Endothelial cell of umbilical vein (primary cell): ENCODE measurements at regions of chr9 and their contacts with region 1.

Region 1: GRCh38 chr9:133184962-133185361 is 21.2 kb upstream of the GBGT1 start:
- DNase-seq: peak; percentile 72
- H3K4me3 ChIP-seq: no peak overlapping the region
- H3K27ac ChIP-seq: no peak overlapping the region
- H3K4me1 ChIP-seq: no peaks in the 10 kb centered on the region
- H3K27me3 ChIP-seq: peaks cover 5 to 9% of the 10 kb centered on the region in 2 experiments
- CTCF ChIP-seq: peak; percentile 57 to 60
- POLR2A ChIP-seq: no peak

Region 2: GRCh38 chr9:133170716-133171559 is 14.0 kb before region 1 on chr9:
- CTCF ChIA-PET with region 1: interaction called, 21 read pairs
- POLR2A ChIA-PET with region 1: no interaction called
- dilution Hi-C with region 1: no loop called
- intact Hi-C with region 1: no loop called
- DNase-seq: no peak
- H3K4me3 ChIP-seq: no peak overlapping the region
- H3K27ac ChIP-seq: no peak overlapping the region
- H3K4me1 ChIP-seq: no peaks in the 10 kb centered on the region
- H3K27me3 ChIP-seq: peaks cover 8 to 13% of the 10 kb centered on the region in 2 experiments
- CTCF ChIP-seq: no peak
- POLR2A ChIP-seq: no peak

Region 3: GRCh38 chr9:133257465-133257956 is 72.5 kb after region 1 on chr9:
- CTCF ChIA-PET with region 1: interaction called, 14 read pairs
- POLR2A ChIA-PET with region 1: no interaction called
- dilution Hi-C with region 1: no loop called
- intact Hi-C with region 1: no loop called
- DNase-seq: peak; percentile 44
- H3K4me3 ChIP-seq: no peak overlapping the region
- H3K27ac ChIP-seq: no peak overlapping the region
- H3K4me1 ChIP-seq: no peaks in the 10 kb centered on the region
- H3K27me3 ChIP-seq: no peaks in the 10 kb centered on the region
- CTCF ChIP-seq: no peak
- POLR2A ChIP-seq: no peak

Region 4: GRCh38 chr9:133320421-133320881 is 135.5 kb after region 1 on chr9:
- CTCF ChIA-PET with region 1: interaction called, 11 read pairs
- POLR2A ChIA-PET with region 1: no interaction called
- dilution Hi-C with region 1: no loop called
- intact Hi-C with region 1: no loop called
- DNase-seq: no peak
- H3K4me3 ChIP-seq: no peak overlapping the region
- H3K27ac ChIP-seq: no peak overlapping the region
- H3K4me1 ChIP-seq: no peaks in the 10 kb centered on the region
- H3K27me3 ChIP-seq: no peaks in the 10 kb centered on the region
- CTCF ChIP-seq: no peak
- POLR2A ChIP-seq: no peak

Region 5: DNA sequence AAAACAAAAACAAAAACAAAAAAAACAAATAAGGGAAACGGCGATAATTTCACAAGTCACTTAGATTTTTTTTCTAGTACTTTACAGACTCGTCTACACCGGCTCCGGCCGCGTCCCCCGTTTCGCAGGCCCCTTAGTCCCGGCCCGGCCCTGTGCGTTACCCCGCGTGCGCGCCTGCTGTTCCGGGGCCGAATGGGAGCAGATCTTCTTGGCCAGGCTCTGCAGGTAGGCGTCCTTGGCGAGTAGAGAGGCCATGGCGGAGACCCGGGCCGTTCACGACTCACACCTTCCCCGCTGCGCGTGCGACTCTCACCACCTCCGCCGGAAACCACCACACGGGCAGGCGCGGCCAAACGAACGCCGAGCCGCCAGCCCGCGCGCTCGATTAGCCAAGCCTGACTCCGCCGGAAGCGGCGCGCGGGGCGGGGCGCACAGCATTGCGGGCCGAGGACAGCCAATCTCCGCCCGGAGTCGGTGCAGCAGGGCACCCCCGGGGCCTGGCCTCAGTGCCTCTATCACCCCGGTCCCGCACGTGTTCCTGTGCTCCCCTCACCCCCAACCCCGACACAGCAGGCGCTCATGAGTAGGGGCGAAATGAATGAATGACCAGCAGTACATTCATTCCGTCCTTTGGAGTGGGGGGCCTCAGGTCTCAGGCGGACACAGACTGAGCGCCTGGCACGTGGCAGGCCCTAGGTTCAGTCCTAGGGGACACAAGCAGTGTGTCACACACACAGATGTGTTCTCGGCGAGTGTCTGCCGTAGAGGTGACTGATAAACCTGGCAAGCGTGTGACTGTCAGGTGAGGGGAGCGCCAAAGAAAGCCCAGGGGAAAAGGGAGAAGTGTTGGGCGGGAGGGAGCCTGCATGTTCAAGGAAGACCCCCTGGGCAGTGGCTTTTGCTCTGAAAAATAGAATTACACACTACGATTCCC is 151.2 kb after region 1 on chr9 and contains the start of gene SURF6:
- CTCF ChIA-PET with region 1: interaction called, 128 read pairs
- POLR2A ChIA-PET with region 1: no interaction called
- dilution Hi-C with region 1: no loop called
- intact Hi-C with region 1: no loop called
- DNase-seq: peak; percentile 89
- H3K4me3 ChIP-seq: peak within 1 kb of the TSS; percentile 64 to 82 (median 71)
- H3K27ac ChIP-seq: peak within 1 kb of the TSS; percentile 44
- H3K4me1 ChIP-seq: peaks cover 7% of the 10 kb centered on the region
- H3K27me3 ChIP-seq: no peaks in the 10 kb centered on the region
- CTCF ChIP-seq: no peak
- POLR2A ChIP-seq: peak; percentile 86
- total RNA-seq, gene SURF6: 16.0 and 16.4 TPM in 2 replicates

Region 6: DNA sequence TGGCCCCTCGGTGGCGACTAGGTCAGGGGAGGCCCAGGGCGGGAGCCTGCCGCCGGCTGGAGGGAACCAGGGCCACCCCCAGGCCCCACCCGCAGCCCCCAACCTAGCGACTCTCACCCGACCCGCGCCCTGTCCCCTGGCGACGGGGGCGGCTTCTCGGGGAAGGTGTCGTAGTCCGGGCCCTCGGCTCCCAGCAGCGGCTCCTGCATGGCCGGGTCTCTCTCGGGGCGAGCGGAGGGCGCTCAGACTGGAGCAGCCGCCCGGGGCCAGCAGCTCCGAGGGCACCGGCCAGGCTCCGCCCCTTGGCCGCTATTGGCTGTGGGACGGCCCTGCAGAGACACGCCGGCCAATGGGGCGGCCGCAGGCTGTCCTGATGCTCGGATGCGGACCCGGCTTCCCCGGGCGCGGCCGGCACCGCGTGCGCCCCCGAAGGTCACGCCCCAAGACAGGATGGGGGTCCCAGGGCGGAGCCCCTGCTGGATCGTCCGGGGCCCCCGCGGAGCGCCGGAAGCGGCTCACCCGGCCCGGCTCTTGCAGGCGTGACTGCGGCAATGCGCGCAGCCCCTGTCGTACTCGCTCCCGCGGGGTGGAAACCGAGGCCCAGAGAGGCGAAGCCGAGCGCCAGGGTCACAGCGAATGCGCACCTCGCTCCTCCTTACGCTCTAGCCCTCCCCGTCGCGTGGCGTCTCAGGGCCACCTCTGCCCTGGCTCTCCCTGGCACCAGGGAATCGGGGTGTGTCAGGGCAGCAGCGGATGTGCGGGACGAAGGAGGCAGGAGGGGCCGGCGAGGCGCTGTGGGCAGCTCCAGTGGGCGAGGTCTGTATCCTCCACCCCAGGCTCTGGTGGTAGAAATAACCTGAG is 294.1 kb after region 1 on chr9 and contains the start of gene SLC2A6:
- CTCF ChIA-PET with region 1: interaction called, 142 read pairs
- POLR2A ChIA-PET with region 1: interaction called, 4 read pairs
- dilution Hi-C with region 1: no loop called
- intact Hi-C with region 1: no loop called
- DNase-seq: peak; percentile 78
- H3K4me3 ChIP-seq: peak within 1 kb of the TSS; percentile 50 to 73 (median 69)
- H3K27ac ChIP-seq: peak within 1 kb of the TSS; percentile 52
- H3K4me1 ChIP-seq: peaks cover 6% of the 10 kb centered on the region
- H3K27me3 ChIP-seq: no peaks in the 10 kb centered on the region
- CTCF ChIP-seq: no peak
- POLR2A ChIP-seq: peak; percentile 72
- total RNA-seq, gene SLC2A6: 35.7 and 39.0 TPM in 2 replicates